ENCODE measurements at regions of chr1 and their contacts with region 1.

Region 1: DNA sequence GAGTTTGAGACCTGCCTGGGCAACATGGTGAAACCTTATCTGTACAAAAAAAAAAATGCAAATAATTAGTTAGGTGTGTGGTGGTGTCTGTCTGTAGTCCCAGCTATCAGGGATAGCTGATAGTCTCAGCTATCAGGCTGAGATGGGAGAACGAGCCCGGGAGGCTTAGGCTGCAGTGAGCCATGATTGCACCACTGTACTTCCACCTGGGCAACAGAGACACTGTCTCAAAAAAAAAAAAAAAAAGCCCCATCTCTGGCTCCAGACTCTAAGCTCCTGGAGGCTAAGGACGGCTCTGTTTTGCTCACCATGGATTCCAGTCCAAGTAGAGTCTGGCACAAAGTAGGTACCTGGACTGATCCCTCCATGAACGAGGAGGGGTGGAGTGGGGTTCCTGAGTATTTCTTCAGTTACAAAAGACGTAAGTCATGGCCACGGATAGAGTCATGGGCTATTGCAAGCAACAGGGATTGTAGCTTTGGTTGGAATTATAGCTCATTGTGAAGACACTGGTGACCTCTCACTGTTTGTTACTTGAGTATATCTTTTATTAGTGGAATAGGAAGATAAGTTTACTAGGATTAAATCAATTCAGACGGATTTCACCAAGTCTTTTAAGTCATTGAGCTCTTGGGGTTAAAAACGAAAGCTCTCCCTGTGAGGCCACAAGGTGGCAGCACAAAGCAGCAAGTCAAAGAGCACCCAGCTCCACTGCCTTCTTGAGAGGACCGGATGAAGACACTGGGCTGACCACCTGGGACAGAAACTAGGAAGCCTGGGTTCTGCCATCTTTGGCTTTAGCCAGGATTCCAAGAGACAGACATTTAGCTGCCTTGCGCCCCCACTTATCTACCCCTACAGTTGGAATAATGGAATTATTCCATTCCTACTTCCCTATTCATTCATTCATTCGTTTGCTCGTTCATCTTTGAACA is 35.6 kb upstream of the TMEM61 start:
- DNase-seq: peak; percentile 77
- ATAC-seq: peak; percentile 90
- H3K4me3 Mint-ChIP-seq: no peak overlapping the region
- H3K27ac Mint-ChIP-seq: no peak overlapping the region
- H3K4me1 Mint-ChIP-seq: peaks cover 5% of the 10 kb centered on the region
- H3K27me3 Mint-ChIP-seq: peaks cover 8% of the 10 kb centered on the region
- CTCF ChIP-seq: peak; percentile 80

Region 2: DNA sequence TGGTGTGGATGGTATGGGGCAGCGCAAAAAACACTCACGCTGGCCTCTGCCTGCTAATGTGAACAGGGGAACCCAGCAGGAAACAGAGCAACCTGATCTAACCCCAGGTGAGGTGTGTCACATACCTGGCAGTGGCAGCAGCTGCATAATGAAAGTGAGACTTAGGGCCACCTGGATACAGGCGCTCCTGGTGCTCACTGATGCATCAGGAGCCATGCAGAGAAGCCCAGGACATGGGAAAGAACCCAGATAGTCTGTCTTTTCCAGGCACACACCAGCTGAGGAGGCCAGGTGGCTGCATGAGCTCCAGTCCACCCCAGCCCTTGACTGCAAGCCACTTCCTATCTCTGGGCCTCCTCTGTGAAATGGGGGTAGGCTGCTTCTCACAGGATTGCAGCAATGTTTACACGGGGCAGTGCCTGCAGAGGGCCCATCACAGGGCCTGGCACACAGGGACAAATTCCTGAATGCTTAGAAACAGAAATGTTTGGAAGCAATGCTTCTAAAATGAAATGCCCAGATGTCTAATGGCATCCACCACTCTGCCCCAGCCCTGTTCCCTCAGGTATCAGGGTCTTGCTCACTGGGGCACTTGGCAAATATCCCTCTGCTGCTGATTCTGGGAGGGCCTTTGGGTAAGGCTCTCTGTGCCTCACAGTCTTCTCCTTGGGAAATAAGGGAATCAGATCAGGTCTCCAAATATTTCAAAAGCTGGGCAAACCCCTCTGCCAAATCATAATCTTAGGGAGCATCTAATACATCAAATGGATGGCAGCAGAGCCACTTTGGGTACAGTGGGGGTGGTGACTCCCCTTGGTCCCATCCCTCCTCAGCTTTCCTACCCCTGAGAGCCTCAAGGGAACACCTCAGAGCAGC is 77.8 kb before region 1 on chr1:
- CTCF ChIA-PET with region 1: no interaction called
- POLR2A ChIA-PET with region 1: no interaction called
- DNase-seq: no peak
- ATAC-seq: no peak
- H3K4me3 Mint-ChIP-seq: no peak overlapping the region
- H3K27ac Mint-ChIP-seq: no peak overlapping the region
- H3K4me1 Mint-ChIP-seq: no peaks in the 10 kb centered on the region
- H3K27me3 Mint-ChIP-seq: no peaks in the 10 kb centered on the region
- CTCF ChIP-seq: no peak

Region 3: DNA sequence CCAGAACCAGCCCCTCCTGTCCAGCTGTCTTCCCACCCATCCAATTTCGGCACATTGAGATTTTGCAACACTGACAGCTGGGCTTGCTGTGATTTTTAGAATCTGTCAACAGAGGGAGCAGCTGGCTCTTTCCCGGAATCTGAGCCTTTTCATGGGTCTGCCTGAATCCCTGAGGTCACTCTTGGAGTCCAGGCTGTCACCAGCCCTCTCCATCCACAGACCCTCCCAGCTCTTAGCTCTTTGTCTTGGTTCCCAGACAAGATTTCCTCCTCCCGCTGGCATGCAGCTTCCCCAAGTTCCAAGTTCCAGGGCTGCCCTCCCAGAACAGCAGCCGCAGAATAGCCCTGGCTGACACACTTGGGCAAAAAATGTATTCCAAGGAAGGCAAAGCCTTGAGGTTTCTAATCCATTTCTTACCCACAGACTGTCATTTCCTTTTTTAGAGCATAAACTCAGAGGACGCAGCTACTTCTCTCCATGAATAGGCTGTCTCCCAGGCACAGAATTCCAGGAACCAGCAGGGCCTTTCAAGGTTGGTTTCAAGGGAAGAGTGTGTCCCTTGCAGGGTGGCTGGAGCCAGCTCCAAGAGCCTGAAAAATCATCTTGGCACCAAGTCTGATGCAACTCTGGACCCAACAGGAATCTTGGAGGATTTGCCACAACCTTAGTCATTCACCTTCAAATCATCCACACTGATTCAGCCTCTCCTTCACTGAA is 28.5 kb after region 1 on chr1:
- CTCF ChIA-PET with region 1: interaction called, 29 read pairs
- POLR2A ChIA-PET with region 1: no interaction called
- DNase-seq: no peak
- ATAC-seq: peak; percentile 90
- H3K4me3 Mint-ChIP-seq: no peak overlapping the region
- H3K27ac Mint-ChIP-seq: no peak overlapping the region
- H3K4me1 Mint-ChIP-seq: peaks cover 20% of the 10 kb centered on the region
- H3K27me3 Mint-ChIP-seq: peaks cover 6% of the 10 kb centered on the region
- CTCF ChIP-seq: no peak

Region 4: GRCh38 chr1:54987919-54988705 is 43.2 kb after region 1 on chr1:
- CTCF ChIA-PET with region 1: interaction called, 39 read pairs
- POLR2A ChIA-PET with region 1: no interaction called
- DNase-seq: no peak
- ATAC-seq: no peak
- H3K4me3 Mint-ChIP-seq: no peak overlapping the region
- H3K27ac Mint-ChIP-seq: no peak overlapping the region
- H3K4me1 Mint-ChIP-seq: peaks cover 12% of the 10 kb centered on the region
- H3K27me3 Mint-ChIP-seq: no peaks in the 10 kb centered on the region
- CTCF ChIP-seq: no peak

Region 5: DNA sequence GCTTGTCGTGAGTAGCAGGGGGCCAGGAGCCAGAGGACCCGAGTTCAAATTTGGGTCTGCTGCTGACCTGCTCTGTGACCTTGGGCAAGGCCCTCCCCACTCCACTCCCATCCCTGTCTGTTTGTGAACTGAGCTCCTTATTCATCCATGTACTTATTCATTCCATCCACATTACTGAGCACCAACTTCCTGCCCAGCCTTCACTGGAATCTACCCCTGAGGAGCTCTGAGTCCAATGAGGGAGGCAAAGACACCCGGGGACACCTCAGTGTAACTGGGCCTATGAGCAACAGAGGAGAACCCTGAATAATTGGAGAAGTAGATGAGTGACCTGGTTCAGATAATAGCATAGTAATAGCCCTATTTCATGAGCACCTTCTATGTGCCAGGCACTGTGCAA is 62.7 kb after region 1 on chr1:
- CTCF ChIA-PET with region 1: interaction called, 632 read pairs
- POLR2A ChIA-PET with region 1: no interaction called
- DNase-seq: no peak
- ATAC-seq: no peak
- H3K4me3 Mint-ChIP-seq: no peak overlapping the region
- H3K27ac Mint-ChIP-seq: no peak overlapping the region
- H3K4me1 Mint-ChIP-seq: peaks cover 18% of the 10 kb centered on the region
- H3K27me3 Mint-ChIP-seq: peaks cover 19% of the 10 kb centered on the region
- CTCF ChIP-seq: no peak

Region 6: DNA sequence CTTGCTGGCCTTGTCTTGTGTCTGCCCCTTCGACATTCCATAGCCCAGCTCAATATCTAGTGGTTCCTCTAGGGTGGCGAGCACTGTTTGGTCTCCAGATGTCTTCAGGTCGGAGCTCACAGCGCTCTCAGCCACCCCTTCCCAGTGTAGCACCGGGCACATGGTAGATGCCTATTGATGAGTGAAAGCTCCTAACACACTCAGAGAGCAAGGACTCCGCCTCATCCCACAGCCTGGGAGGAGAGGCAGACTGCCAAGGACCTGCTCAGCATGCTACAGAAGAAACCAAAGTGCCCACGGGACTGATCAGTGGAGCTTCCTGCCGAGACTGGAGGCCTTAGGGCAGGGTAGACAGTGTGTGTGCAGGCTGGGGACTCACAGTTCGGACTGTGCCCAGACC is 105.4 kb after region 1 on chr1:
- CTCF ChIA-PET with region 1: interaction called, 22 read pairs
- POLR2A ChIA-PET with region 1: no interaction called
- DNase-seq: no peak
- ATAC-seq: no peak
- H3K4me3 Mint-ChIP-seq: no peak overlapping the region
- H3K27ac Mint-ChIP-seq: no peak overlapping the region
- H3K4me1 Mint-ChIP-seq: 0 out of 2 replicates have a peak, but pooled peaks cover 2% of the 10 kb centered on the region
- H3K27me3 Mint-ChIP-seq: no peaks in the 10 kb centered on the region
- CTCF ChIP-seq: no peak

Measured in WTC11 (cell line).